ENCODE measurements at regions of chr18 and their contacts with region 1.

Region 1: GRCh38 chr18:24543805-24544498 is 83.5 kb downstream of the HRH4 start:
- DNase-seq: no peak
- ATAC-seq: no peak
- H3K4me3 Mint-ChIP-seq: no peak overlapping the region
- H3K27ac Mint-ChIP-seq: no peak overlapping the region
- H3K4me1 Mint-ChIP-seq: no peaks in the 10 kb centered on the region
- H3K27me3 Mint-ChIP-seq: peaks cover 5% of the 10 kb centered on the region

Region 2: GRCh38 chr18:24456549-24456948 is 87.4 kb before region 1 on chr18:
- CTCF ChIA-PET with region 1: no interaction called
- POLR2A ChIA-PET with region 1: no interaction called
- intact Hi-C with region 1: no loop called
- DNase-seq: no peak
- ATAC-seq: peak; percentile 81
- H3K4me3 Mint-ChIP-seq: no peak overlapping the region
- H3K27ac Mint-ChIP-seq: no peak overlapping the region
- H3K4me1 Mint-ChIP-seq: peaks cover 23% of the 10 kb centered on the region
- H3K27me3 Mint-ChIP-seq: no peaks in the 10 kb centered on the region

Region 3: DNA sequence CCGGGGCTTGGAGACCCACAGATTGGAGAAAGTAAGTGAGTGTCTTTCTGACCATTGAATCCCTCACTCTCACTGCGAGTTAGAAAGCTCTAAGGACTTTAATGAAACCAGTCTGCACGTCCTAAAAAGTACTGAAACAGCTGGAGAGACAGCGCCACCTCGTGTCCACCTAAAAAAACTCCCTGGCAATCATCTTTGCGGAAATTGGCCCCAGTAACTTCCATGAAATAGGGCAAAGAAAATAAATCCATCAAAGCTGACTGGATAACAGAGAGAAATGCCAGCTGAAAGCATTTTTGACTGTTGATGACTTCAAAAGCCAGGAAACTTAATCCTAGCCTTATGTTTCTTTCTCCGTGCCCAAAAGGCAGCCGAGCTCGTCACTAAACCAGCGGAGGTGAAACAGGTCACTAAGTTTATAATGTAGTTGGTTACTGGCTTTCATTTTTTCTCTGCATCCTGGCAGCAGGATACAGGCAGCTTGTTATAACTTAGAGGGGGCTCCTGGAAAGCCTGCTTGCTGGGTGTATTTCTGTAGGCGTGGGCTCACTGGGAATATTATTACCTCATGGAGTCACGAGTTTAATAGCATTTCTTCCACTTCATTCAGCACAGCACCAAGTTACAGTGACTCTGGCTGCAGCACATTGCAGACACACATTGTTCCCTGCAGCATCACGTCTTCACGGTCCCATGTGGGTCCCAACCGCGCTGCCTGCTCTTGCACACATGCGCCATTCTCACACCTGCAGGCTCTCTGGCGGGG is 183.0 kb after region 1 on chr18:
- CTCF ChIA-PET with region 1: interaction called, 5 read pairs
- POLR2A ChIA-PET with region 1: no interaction called
- intact Hi-C with region 1: loop called in 1 of 2 experiments (anchors 1 kb)
- DNase-seq: peak; percentile 79
- ATAC-seq: no peak
- H3K4me3 Mint-ChIP-seq: no peak overlapping the region
- H3K27ac Mint-ChIP-seq: no peak overlapping the region
- H3K4me1 Mint-ChIP-seq: no peaks in the 10 kb centered on the region
- H3K27me3 Mint-ChIP-seq: peaks cover 5% of the 10 kb centered on the region

Measured in activated CD4-positive, alpha-beta T cell treated with anti-CD3 and anti-CD28 coated beads for 36 hours (primary cell).